CD8-positive, alpha-beta T cell (primary cell): ENCODE measurements at regions of chr6 and their contacts with region 1.

Region 1: DNA sequence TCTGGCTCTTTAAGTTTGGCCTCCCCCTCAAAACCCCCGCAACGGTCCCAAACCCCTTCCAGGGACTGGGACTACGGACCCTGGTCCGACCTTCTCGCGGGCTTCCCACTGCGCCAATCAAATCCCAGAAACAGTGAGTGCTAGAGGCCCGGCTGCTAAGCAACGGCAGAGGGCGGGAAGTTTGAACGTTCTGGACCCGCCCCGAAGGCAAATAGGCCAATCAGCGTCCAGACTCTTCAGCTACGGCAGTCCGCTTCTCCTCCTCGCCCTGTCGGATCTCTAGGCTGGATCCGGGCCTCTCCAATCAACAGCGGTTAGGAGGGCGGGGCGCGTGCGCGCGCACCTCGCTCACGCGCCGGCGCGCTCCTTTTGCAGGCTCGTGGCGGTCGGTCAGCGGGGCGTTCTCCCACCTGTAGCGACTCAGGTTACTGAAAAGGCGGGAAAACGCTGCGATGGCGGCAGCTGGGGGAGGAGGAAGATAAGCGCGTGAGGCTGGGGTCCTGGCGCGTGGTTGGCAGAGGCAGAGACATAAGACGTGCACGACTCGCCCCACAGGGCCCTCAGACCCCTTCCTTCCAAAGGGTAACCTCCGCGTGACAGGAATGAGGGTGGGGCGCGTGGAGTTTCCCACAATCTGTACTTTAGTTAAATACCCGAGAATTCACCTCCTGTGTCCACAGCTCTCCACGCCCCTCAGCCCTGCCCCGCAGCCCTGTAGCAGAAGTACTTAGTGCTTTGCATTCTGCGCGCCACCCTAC is at the start of gene MSH5:
- DNase-seq: peak; percentile 86 to 98 (median 94)
- ATAC-seq: peak; percentile 86
- H3K4me3 ChIP-seq: peak within 1 kb of the TSS; percentile 81 to 85
- H3K4me3 Mint-ChIP-seq: peak within 1 kb of the TSS; percentile 98
- H3K27ac ChIP-seq: peak within 1 kb of the TSS; percentile 28 to 94
- H3K27ac Mint-ChIP-seq: peak within 1 kb of the TSS; percentile 90
- H3K4me1 ChIP-seq: peaks cover 43% of the 10 kb centered on the region
- H3K4me1 Mint-ChIP-seq: peaks cover 56% of the 10 kb centered on the region
- H3K27me3 ChIP-seq: no peaks in the 10 kb centered on the region
- H3K27me3 Mint-ChIP-seq: no peaks in the 10 kb centered on the region
- CTCF ChIP-seq: no peak
- total RNA-seq, gene MSH5: 7.5 to 8.4 TPM

Region 2: GRCh38 chr6:31541658-31542521 is 197.9 kb before region 1 on chr6 and contains the start of gene DDX39B:
- CTCF ChIA-PET with region 1: no interaction called
- POLR2A ChIA-PET with region 1: interaction called, 3 read pairs
- intact Hi-C with region 1: loop called (anchors 5 to 10 kb)
- DNase-seq: peak; percentile 85 to 98 (median 93)
- ATAC-seq: peak; percentile 67
- H3K4me3 ChIP-seq: peak within 1 kb of the TSS; percentile 76 to 86
- H3K4me3 Mint-ChIP-seq: peak within 1 kb of the TSS; percentile 98
- H3K27ac ChIP-seq: peak within 1 kb of the TSS; percentile 95 to 96
- H3K27ac Mint-ChIP-seq: peak within 1 kb of the TSS; percentile 100
- H3K4me1 ChIP-seq: peaks cover 37% of the 10 kb centered on the region
- H3K4me1 Mint-ChIP-seq: peaks cover 56% of the 10 kb centered on the region
- H3K27me3 ChIP-seq: no peaks in the 10 kb centered on the region
- H3K27me3 Mint-ChIP-seq: no peaks in the 10 kb centered on the region
- CTCF ChIP-seq: no peak
- total RNA-seq, gene DDX39B: 483 to 518 TPM

Region 3: DNA sequence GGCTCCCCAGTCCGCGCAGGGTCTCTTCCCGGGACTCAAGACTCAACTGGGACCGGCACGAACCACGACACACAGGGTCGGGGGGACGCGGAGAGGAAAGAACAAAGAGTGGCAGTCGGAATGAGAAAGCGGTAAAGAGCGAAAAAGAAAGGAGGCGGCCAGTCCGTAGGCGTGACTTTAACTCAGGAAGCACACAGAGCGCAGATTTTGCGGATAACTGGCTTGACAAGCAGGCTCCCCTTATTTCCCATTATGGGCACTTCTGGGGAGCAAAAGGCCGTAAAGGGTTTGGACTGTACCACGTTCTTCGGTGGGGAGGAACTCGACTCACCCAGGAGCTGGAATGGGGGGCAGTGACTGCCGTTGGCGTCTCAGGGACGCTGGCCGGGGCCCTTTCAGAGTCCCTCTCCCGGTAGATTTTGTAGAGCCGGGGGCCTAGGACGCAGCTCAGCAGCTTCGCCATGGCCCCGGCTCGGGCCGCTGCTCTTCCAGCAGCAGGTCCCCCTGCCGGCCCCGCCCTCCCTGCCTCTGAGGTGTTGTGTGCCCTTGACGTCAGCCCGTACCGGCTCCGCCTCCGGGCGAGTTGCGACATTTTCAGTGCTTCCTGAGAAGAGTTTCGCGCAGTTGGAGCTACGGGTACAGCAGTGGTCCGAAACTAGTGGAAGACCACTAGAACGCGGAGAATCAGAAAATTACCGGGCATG is 36.8 kb before region 1 on chr6 and contains the start of gene ABHD16A:
- CTCF ChIA-PET with region 1: no interaction called
- POLR2A ChIA-PET with region 1: interaction called, 10 read pairs
- intact Hi-C with region 1: loop called in 1 of 2 experiments (anchors 2 kb)
- DNase-seq: peak; percentile 93 to 99 (median 98)
- ATAC-seq: peak; percentile 93
- H3K4me3 ChIP-seq: peak within 1 kb of the TSS; percentile 83 to 98
- H3K4me3 Mint-ChIP-seq: peak within 1 kb of the TSS; percentile 99
- H3K27ac ChIP-seq: peak within 1 kb of the TSS; percentile 91 to 100
- H3K27ac Mint-ChIP-seq: peak within 1 kb of the TSS; percentile 92
- H3K4me1 ChIP-seq: peaks cover 22% of the 10 kb centered on the region
- H3K4me1 Mint-ChIP-seq: peaks cover 36% of the 10 kb centered on the region
- H3K27me3 ChIP-seq: no peaks in the 10 kb centered on the region
- H3K27me3 Mint-ChIP-seq: no peaks in the 10 kb centered on the region
- CTCF ChIP-seq: no peak
- total RNA-seq, gene ABHD16A: 79.6 to 81.6 TPM

Region 4: GRCh38 chr6:31769684-31770371 is 30.0 kb after region 1 on chr6:
- CTCF ChIA-PET with region 1: interaction called, 25 read pairs
- POLR2A ChIA-PET with region 1: interaction called, 6 read pairs
- intact Hi-C with region 1: loop called in 1 of 2 experiments (anchors 1 kb)
- DNase-seq: peak; percentile 63 to 86 (median 80)
- ATAC-seq: peak; percentile 87
- H3K4me3 ChIP-seq: no peak overlapping the region
- H3K4me3 Mint-ChIP-seq: no peak overlapping the region
- H3K27ac ChIP-seq: no peak overlapping the region
- H3K27ac Mint-ChIP-seq: no peak overlapping the region
- H3K4me1 ChIP-seq: peaks cover 25% of the 10 kb centered on the region
- H3K4me1 Mint-ChIP-seq: peaks cover 27% of the 10 kb centered on the region
- H3K27me3 ChIP-seq: no peaks in the 10 kb centered on the region
- H3K27me3 Mint-ChIP-seq: no peaks in the 10 kb centered on the region
- CTCF ChIP-seq: peak; percentile 60

Region 5: GRCh38 chr6:31806465-31807272 is 66.9 kb after region 1 on chr6 and contains the start of gene LSM2:
- CTCF ChIA-PET with region 1: interaction called, 3 read pairs
- POLR2A ChIA-PET with region 1: interaction called, 16 read pairs
- intact Hi-C with region 1: loop called in 1 of 2 experiments (anchors 2 kb)
- DNase-seq: peak; percentile 92 to 99 (median 97)
- ATAC-seq: peak; percentile 99
- H3K4me3 ChIP-seq: peak within 1 kb of the TSS; percentile 61 to 95
- H3K4me3 Mint-ChIP-seq: peak within 1 kb of the TSS; percentile 87
- H3K27ac ChIP-seq: peak within 1 kb of the TSS; percentile 78 to 82
- H3K27ac Mint-ChIP-seq: peak within 1 kb of the TSS; percentile 94
- H3K4me1 ChIP-seq: peaks cover 8% of the 10 kb centered on the region
- H3K4me1 Mint-ChIP-seq: peaks cover 25% of the 10 kb centered on the region
- H3K27me3 ChIP-seq: no peaks in the 10 kb centered on the region
- H3K27me3 Mint-ChIP-seq: no peaks in the 10 kb centered on the region
- CTCF ChIP-seq: no peak
- total RNA-seq, gene LSM2: 19.6 to 26.4 TPM

Region 6: DNA sequence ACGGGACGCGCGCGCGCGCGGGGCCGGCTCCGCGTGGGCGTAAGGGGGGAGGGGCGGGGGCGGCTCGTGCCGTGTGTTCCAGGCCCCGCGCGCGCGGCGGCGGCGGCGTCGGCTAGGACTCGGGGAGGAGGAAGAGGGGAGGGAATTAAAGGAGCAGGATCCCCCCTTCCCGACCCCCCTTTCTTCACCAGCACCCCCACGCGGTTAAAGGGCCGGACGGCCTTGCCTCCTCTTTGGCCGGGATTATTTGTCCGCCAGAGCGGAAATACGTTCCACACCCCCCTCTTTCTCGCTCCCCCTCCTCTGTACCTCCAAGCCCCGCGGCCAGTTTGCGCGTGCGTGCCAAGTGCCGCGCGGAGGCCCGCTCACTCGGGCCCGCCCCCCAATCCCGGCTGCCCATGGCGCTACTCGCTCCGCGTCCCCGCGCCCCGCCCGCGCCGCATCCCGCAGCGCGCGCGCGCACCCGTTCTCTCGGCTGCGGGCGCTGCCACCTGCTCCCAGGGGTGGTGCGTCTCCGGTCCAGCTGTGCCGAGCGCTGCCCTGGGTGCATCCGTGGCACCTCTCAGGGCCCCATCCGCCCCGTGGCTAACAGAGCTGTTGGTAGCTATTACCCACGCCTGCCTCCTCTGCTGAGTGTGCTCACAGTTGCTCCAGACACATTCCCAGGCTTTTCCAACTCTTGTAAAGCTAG is 162.3 kb after region 1 on chr6 and contains the start of gene ZBTB12:
- CTCF ChIA-PET with region 1: no interaction called
- POLR2A ChIA-PET with region 1: interaction called, 5 read pairs
- intact Hi-C with region 1: loop called in 1 of 2 experiments (anchors 1 kb)
- DNase-seq: peak; percentile 68 to 94 (median 84)
- ATAC-seq: peak; percentile 54
- H3K4me3 ChIP-seq: peak within 1 kb of the TSS; percentile 70 to 97
- H3K4me3 Mint-ChIP-seq: peak within 1 kb of the TSS; percentile 89
- H3K27ac ChIP-seq: peak within 1 kb of the TSS; percentile 47 to 76
- H3K27ac Mint-ChIP-seq: peak within 1 kb of the TSS; percentile 77
- H3K4me1 ChIP-seq: peaks cover 30% of the 10 kb centered on the region
- H3K4me1 Mint-ChIP-seq: peaks cover 32% of the 10 kb centered on the region
- H3K27me3 ChIP-seq: no peaks in the 10 kb centered on the region
- H3K27me3 Mint-ChIP-seq: no peaks in the 10 kb centered on the region
- CTCF ChIP-seq: no peak
- total RNA-seq, gene ZBTB12: 0.27 TPM in 1 of 2 experiments, not detected in the other